ENCODE measurements at regions of chr1 and their contacts with region 1.

Region 1: GRCh38 chr1:147890177-147890790 is 12.3 kb upstream of the GJA8 start:
- DNase-seq: peak; percentile 77
- ATAC-seq: peak; percentile 91 to 92

Region 2: GRCh38 chr1:147273409-147274336 is 616.6 kb before region 1 on chr1:
- intact Hi-C with region 1: loop called in 1 of 2 experiments (anchors 10 kb)
- DNase-seq: no peak
- ATAC-seq: peak; percentile 55 to 81

Region 3: DNA sequence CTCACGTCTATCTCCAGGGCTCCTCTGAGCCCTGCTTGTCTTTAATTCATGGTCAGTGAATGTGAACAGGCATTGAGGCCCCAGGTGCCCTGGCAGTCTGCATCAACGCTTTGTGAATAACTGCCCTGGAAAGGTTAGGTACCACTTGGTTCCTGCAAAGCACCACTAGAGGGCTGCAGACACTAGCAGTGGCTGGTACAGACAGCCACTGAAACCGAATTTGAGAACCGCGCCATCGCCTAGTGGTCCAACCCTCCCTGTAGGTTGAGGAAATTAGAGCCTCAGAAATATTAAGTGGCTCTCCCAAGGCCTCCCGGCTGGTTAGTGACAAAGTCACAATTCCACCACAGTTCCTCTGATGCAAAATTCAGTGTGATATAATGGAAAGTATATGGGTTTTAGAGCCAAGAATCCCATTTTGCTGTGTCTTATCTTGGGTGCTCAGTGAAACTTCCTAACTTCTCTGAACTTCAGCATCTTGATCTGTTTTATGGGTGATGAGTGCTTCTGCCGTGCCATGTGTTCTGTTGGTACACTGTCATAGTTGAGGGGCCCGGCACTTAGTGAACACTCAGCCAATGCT is 395.2 kb before region 1 on chr1:
- intact Hi-C with region 1: loop called in 1 of 2 experiments (anchors 5 kb)
- DNase-seq: peak; percentile 85
- ATAC-seq: peak; percentile 94 to 96

Region 4: DNA sequence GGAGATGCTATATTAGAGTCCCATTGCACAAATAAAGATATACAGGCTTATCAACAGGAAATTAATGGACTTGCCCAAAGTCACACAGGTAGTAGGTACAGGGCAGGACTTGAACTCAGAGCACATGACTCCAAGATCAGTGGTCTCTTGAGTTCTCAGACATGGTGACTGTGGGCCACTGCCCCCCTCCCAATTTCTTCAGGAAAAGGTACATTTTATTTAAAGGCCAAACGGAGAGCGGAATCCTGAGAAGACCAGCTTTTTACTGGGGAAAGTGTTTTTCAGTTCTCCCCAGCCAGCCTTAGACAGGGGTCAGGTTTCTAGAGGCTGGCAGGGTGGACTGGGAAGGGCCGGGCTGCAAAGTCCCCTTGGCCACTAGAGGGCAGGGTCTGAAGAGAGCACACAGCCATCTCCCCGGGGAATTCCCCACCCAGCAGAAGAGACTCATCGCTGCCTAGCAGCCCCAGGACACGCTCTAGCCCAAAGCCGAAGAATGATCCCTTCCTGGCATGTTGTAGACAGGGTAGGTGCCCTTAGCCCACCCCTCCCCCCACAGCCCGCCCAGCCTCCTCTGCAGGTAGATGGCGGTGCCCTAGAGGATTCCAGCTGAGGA is 249.6 kb before region 1 on chr1:
- intact Hi-C with region 1: loop called (anchors 1 to 10 kb)
- DNase-seq: peak; percentile 75
- ATAC-seq: peak; percentile 92 to 96

Region 5: DNA sequence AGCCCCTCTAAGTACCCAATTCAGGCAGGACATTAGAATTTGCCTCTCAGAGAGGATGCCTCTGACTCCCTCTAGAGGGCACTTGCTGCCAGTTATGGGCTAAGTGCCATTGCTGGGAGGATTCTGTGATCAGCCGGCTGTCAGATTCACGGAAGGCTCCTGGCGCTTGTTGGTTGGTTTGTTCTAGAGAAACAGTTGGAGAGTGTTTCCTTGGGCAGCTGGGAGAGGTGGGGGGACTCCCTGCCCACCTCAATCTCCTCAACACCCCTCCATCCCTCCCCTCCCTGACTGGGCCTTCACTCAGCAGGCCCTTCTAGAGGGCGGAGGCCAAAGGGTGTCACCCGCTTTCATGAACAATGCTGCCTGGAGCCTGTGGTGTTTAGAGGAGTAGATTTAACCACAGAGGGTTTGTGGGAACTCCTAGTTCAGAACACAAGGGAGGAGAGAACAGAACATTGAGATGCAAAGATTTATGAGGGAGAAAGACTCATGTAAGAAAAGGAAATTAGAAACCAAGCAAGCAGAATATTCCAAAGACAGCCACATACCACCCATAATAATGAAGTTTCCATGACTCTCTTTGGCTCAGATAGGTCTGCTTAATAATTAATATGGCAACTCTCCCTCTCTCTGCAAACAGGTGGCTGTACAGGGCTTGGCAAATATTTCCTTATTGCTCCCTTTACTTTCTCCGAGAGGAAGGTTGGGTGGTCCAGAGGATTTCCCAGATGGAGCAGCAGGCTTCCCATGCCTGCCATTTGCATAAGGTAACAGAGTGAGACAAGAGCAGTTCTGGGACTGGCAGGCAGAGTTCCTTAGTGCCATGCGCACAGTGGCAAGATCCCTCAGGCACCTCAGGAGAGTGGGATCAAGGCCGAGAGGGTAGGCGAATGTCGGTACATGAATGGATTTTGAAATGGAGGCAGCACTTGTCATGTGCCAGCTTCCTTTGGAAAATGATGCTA is 190.0 kb before region 1 on chr1:
- intact Hi-C with region 1: no loop called
- DNase-seq: peak; percentile 58
- ATAC-seq: peak; percentile 88 to 89

Region 6: GRCh38 chr1:147723691-147724323 is 166.5 kb before region 1 on chr1:
- intact Hi-C with region 1: loop called (anchors 1 to 2 kb)
- DNase-seq: peak; percentile 54
- ATAC-seq: peak; percentile 91 to 92

Region 7: DNA sequence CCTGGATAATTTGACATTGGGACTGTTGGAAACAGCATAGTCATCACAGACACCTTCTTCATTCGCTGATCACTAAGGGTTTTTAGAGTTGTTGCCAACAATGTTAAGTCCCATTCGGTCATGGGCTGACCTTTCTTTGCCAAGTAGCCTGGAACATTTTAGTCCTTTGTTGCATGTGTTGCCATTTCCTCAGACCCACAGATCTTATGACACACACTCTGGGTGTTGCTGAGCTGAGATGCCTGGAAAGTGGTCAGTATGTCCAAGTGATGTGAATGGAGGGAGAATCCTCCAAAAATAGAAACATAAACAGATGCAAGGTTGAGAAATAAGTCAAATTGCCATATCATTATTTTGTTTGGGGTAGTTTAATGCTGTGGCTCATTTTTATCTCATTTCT is 68.4 kb before region 1 on chr1:
- intact Hi-C with region 1: loop called in 1 of 2 experiments (anchors 5 kb)
- DNase-seq: peak; percentile 32
- ATAC-seq: peak; percentile 94 to 96

Region 8: GRCh38 chr1:148259559-148259958 is 369.3 kb after region 1 on chr1:
- intact Hi-C with region 1: no loop called
- DNase-seq: no peak
- ATAC-seq: no peak